Right ventricle myocardium superior (tissue), 1 donor: ENCODE measurements at regions of chr3 and their contacts with region 1.

Region 1: DNA sequence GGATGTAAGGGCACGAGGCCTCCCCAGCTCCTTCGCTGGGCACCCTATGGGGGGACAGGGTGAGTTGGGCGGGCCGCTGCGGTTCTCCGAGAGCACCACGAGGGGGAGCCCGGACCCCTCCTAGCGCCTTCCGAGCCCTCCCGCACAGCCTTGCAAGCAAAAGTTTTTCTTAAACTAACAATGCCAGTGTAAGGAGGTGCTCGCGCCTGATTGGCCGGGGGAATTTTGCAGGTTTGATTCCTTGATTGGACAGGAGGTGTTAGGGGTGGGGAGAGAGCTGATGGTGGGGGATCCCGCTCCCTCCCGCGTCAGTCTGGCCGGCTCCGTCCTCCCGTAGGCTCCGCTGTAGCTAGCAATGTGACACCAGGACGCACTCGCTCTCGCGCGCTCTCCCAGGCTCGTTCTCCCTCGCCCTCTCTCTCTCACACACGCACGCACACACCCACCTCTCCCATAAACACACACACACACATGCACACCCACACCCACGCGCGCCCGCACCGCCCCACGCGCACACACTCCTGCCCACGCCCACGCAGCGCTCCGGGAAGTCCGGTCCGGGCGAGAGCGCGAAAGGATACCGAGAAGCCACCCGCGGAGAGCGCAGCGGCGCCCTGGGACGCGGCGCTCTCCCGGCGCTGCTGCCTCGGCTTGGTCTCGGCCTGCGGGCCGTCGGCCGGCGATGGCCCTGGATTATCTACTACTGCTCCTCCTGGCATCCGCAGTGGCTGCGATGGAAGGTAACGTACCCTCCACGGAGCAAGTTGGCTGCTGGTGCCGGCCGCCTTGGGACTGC is at the start of gene EPHB1:
- DNase-seq: peak; percentile 87
- ATAC-seq: peak; percentile 93
- total RNA-seq, gene EPHB1: 1.1 TPM

Region 2: GRCh38 chr3:134650431-134651346 is 144.5 kb before region 1 on chr3 and contains the start of gene KY:
- intact Hi-C with region 1: no loop called
- DNase-seq: peak; percentile 73
- ATAC-seq: peak; percentile 92
- total RNA-seq, gene KY: 13.7 TPM

Region 3: GRCh38 chr3:135240426-135240825 is 445.3 kb after region 1 on chr3:
- intact Hi-C with region 1: loop called (anchors 10 kb)
- DNase-seq: no peak
- ATAC-seq: no peak

Region 4: GRCh38 chr3:135503760-135504686 is 708.9 kb after region 1 on chr3:
- intact Hi-C with region 1: loop called (anchors 5 kb)
- DNase-seq: peak; percentile 79
- ATAC-seq: peak; percentile 86

Region 5: GRCh38 chr3:135891121-135891520 is 1096.0 kb after region 1 on chr3:
- intact Hi-C with region 1: loop called (anchors 5 kb)
- DNase-seq: no peak
- ATAC-seq: no peak